MCF 10A (cell line): ENCODE measurements at regions of chr18 and their contacts with region 1.

Region 1: DNA sequence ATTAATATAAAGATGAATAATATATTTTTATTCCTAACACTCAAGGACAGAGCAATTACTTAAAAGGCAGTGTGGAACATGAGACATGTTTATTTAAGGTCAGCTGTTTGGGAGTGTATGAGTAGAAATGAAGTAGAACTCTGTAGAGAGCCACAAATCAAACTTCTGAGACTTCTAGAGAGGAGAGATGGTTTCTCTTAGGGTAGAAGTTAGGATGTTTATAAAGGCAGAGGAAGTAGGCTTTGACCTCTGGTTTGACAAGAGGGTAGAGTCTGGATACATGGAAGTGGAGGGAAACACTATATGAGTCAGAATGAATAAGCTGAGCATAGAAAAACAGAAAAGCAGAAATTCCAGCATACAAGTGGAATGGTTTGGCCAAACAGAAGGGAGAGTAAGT is 262.1 kb upstream of the KLHL14 start:
- DNase-seq: no peak
- H3K4me3 Mint-ChIP-seq: no peak overlapping the region
- H3K27ac Mint-ChIP-seq: no peak overlapping the region
- H3K4me1 Mint-ChIP-seq: no peaks in the 10 kb centered on the region
- H3K27me3 Mint-ChIP-seq: peaks cover 28% of the 10 kb centered on the region
- CTCF ChIP-seq: no peak

Region 2: GRCh38 chr18:32998285-32998684 is 36.7 kb before region 1 on chr18:
- CTCF ChIA-PET with region 1: no interaction called
- POLR2A ChIA-PET with region 1: no interaction called
- intact Hi-C with region 1: loop called (anchors 1 kb)
- DNase-seq: no peak
- H3K4me3 Mint-ChIP-seq: no peak overlapping the region
- H3K27ac Mint-ChIP-seq: no peak overlapping the region
- H3K4me1 Mint-ChIP-seq: no peaks in the 10 kb centered on the region
- H3K27me3 Mint-ChIP-seq: peaks cover 88% of the 10 kb centered on the region
- CTCF ChIP-seq: no peak

Region 3: DNA sequence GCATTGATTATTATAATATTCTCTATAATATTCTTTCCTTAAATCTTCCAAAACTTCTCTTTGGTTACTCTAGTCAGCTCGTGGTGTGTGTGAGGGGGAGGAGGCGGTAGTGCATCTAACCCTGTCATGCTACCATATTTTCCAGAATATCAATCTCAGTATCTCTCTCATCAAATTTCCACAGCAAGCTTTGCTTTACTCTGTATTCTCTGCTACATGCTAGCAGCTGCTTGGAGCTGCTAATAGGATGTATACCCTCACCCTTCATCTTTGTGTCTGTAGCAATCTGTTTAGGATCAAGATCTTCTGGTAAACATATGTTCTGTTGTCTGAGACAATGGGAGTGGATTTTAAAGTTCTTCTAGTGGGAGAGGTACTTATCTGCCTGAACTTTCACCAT is 41.7 kb after region 1 on chr18:
- CTCF ChIA-PET with region 1: no interaction called
- POLR2A ChIA-PET with region 1: no interaction called
- intact Hi-C with region 1: no loop called
- DNase-seq: no peak
- H3K4me3 Mint-ChIP-seq: no peak overlapping the region
- H3K27ac Mint-ChIP-seq: no peak overlapping the region
- H3K4me1 Mint-ChIP-seq: no peaks in the 10 kb centered on the region
- H3K27me3 Mint-ChIP-seq: peaks cover 63% of the 10 kb centered on the region
- CTCF ChIP-seq: no peak